CD4-positive, alpha-beta T cell (primary cell): ENCODE measurements at regions of chr6 and their contacts with region 1.

Region 1: DNA sequence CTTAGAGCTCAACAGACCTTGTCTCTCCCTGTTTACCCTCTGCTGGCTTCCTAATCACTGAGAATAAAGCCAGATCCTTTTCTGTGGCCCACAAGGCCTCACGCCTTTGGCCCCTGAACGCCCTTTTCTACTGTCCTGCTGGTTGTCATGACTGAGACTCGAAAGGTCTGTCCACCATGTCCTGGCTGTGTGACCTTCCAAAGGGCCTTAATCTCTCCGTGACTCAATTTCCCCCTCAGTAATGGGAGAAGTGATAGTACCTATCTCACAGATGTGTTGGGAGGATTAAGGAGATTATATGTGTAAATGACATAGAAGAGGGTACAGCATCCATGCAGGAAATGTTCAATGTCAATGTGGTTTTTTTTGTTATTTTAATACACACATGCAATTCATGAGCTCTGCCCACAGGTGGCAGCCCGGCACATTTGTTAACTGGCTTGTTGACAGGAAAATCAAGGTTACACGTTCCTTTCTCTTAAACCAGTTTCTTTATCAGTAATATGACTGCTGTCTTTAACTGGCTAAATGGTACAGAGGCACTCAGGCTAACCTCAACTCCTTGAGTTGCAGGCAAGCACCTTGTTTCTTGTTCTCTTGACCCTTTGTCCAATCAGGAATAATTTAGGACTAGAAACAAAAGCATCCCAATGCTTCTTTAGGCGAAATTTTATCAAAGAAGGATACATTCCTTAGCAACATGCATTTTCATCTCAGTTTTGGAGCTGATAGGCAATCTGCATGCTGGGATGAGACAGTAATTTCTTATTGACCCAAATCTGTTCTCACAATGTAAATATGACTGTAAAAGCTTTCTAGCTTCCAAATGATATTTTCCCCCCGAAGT is 16.6 kb downstream of the SLC22A1 start:
- DNase-seq: peak; percentile 41 to 74 (median 57)
- ATAC-seq: peak; percentile 68
- H3K4me3 ChIP-seq: no peak overlapping the region
- H3K4me3 Mint-ChIP-seq: no peak overlapping the region
- H3K27ac ChIP-seq: no peak overlapping the region
- H3K27ac Mint-ChIP-seq: no peak overlapping the region
- H3K4me1 ChIP-seq: peaks cover 7% of the 10 kb centered on the region
- H3K4me1 Mint-ChIP-seq: peaks cover 9% of the 10 kb centered on the region
- H3K27me3 ChIP-seq: no peaks in the 10 kb centered on the region
- H3K27me3 Mint-ChIP-seq: no peaks in the 10 kb centered on the region
- CTCF ChIP-seq: peak; percentile 78

Region 2: GRCh38 chr6:159042003-159042825 is 1096.0 kb before region 1 on chr6:
- CTCF ChIA-PET with region 1: no interaction called
- POLR2A ChIA-PET with region 1: no interaction called
- intact Hi-C with region 1: no loop called
- DNase-seq: peak; percentile 57 to 94 (median 68)
- ATAC-seq: peak; percentile 54
- H3K4me3 ChIP-seq: peak overlapping the region; percentile 88
- H3K4me3 Mint-ChIP-seq: peak overlapping the region; percentile 97
- H3K27ac ChIP-seq: peak overlapping the region; percentile 81 to 91
- H3K27ac Mint-ChIP-seq: peak overlapping the region; percentile 91
- H3K4me1 ChIP-seq: peaks cover 61% of the 10 kb centered on the region
- H3K4me1 Mint-ChIP-seq: peaks cover 76% of the 10 kb centered on the region
- H3K27me3 ChIP-seq: no peaks in the 10 kb centered on the region
- H3K27me3 Mint-ChIP-seq: no peaks in the 10 kb centered on the region
- CTCF ChIP-seq: peak; percentile 99

Region 3: GRCh38 chr6:160160450-160160849 is 22.2 kb after region 1 on chr6:
- CTCF ChIA-PET with region 1: no interaction called
- POLR2A ChIA-PET with region 1: no interaction called
- intact Hi-C with region 1: no loop called
- DNase-seq: no peak
- ATAC-seq: no peak
- H3K4me3 ChIP-seq: no peak overlapping the region
- H3K4me3 Mint-ChIP-seq: no peak overlapping the region
- H3K27ac ChIP-seq: no peak overlapping the region
- H3K27ac Mint-ChIP-seq: no peak overlapping the region
- H3K4me1 ChIP-seq: no peaks in the 10 kb centered on the region
- H3K4me1 Mint-ChIP-seq: no peaks in the 10 kb centered on the region
- H3K27me3 ChIP-seq: no peaks in the 10 kb centered on the region
- H3K27me3 Mint-ChIP-seq: peaks cover 6% of the 10 kb centered on the region
- CTCF ChIP-seq: no peak

Region 4: GRCh38 chr6:160534050-160534696 is 396.0 kb after region 1 on chr6:
- CTCF ChIA-PET with region 1: interaction called, 5 read pairs
- POLR2A ChIA-PET with region 1: no interaction called
- intact Hi-C with region 1: loop called (anchors 1 kb)
- DNase-seq: peak; percentile 32 to 75 (median 51)
- ATAC-seq: peak; percentile 64
- H3K4me3 ChIP-seq: peak overlapping the region; percentile 6
- H3K4me3 Mint-ChIP-seq: no peak overlapping the region
- H3K27ac ChIP-seq: no peak overlapping the region
- H3K27ac Mint-ChIP-seq: no peak overlapping the region
- H3K4me1 ChIP-seq: peaks cover 9% of the 10 kb centered on the region
- H3K4me1 Mint-ChIP-seq: no peaks in the 10 kb centered on the region
- H3K27me3 ChIP-seq: no peaks in the 10 kb centered on the region
- H3K27me3 Mint-ChIP-seq: peaks cover 7% of the 10 kb centered on the region
- CTCF ChIP-seq: peak; percentile 96